ENCODE measurements at regions of chr16 and their contacts with region 1.

Region 1: DNA sequence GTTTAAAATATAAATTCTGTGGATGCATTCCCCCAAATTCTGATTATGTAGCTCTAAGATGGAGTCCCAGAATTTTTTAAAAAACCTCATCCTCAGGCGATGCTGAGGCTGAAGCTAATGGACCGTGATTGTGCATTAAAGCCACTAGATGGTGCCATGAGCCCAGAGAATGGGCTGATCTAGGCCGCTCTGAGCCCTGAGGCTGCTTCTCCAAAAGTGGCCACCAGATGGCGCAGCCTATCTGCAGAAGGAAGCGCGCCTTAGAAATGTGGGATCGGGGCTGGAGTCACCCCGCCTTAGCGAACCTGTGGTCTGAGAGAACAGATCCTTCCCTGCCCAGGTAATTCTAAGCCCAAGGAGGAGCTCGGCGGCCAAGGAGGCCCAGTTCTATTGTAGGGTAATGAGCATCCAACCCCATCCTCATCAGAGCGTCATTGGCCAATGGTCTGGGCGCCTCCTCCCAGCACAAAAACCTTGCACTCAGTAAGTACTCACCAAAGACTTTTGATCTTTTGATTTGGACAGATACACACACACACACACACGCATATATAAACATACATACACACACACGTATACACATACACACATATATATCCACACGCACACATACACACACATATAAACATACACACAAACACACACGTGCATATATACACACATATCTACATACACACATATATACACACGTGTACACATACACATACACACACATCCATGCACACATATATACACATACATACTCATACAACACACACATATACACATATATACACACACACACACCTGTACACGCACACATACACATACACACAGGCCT is 13.7 kb upstream of the MMP2 start:
- DNase-seq: peak; percentile 90 to 97
- H3K4me3 ChIP-seq: no peak overlapping the region
- CTCF ChIP-seq: peak; percentile 21 to 100 (median 65)
- POLR2A ChIP-seq: no peak

Region 2: DNA sequence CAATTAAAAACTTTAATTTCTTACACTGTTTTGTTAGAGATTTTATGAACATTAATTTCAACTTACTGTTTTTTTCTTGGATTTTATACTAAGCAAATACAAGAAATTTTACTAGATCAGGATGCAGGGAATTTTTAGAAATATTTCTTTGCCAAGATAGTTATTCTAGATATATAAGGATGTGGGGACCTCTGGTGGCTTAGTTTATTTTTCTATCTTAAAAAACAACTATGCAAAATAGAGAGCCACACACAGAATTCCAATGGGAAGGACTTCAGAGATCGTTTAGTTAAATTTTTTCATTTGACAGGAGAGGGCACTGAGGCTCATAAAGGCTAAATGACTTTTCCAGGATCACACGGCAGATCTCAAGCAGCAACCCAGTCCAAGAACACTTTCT is 78.2 kb after region 1 on chr16:
- intact Hi-C with region 1: loop called (anchors 5 kb)
- DNase-seq: no peak
- H3K4me3 ChIP-seq: no peak overlapping the region
- CTCF ChIP-seq: no peak
- POLR2A ChIP-seq: no peak

Region 3: DNA sequence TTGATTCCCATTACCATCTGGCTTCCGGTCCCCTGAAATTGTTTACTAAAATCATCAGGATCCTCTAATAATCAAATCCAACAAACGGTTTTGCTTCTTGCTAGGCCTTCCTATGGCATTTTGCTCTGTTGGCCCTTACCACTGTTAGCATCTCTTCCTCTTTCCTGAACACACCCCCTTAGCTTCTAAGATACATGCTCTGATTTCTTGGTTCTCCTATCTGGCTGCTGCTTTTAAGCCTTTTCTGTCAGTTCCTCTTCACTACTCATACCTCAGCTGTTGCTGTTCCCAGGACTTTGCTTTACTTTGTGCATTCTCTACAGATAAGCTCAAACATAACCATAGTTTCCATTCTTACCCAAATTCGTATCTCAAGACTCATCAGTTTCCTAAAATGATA is 112.6 kb after region 1 on chr16:
- intact Hi-C with region 1: no loop called
- DNase-seq: no peak
- H3K4me3 ChIP-seq: no peak overlapping the region
- CTCF ChIP-seq: no peak
- POLR2A ChIP-seq: no peak

Region 4: GRCh38 chr16:55701442-55702319 is 236.4 kb after region 1 on chr16:
- intact Hi-C with region 1: loop called (anchors 2 kb)
- DNase-seq: peak in 1 of 2 donors; percentile 90
- H3K4me3 ChIP-seq: no peak overlapping the region
- CTCF ChIP-seq: peak in 1 of 3 donors; percentile 32
- POLR2A ChIP-seq: no peak

Region 5: DNA sequence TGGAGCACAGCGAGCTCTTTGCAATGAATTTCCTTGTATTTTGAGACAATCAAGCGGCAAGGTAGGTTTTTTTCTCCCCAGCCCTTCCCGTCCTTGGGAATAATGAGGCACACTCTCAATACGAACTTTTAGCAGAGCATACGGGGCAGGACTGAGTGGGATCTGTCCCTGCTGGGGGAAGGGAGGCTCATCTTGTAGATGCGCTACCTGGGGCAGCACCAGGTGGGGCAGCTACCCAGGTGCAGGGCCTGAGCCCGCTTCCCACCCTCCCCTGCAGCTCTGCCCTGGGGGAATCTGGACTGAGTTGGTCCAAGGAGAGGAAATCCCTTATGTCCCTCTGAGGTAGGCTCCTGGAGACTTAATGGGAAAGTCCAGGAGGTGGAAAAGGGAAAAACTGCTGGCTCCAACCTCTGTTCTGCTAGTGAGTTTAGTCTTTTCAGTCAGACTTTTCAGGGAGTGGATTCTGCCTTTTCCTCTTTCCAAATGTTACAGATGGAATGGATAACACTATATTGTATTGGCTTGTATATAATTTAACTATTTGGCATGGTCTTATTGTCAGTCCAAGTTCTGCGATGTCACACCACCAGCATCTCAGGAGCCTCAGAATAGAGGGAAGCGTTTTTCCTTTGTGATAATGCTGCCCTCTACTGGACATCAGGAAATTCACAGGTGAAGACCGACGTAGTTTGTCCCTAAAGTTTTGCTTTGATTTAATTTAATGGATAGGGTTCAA is 377.2 kb after region 1 on chr16:
- intact Hi-C with region 1: loop called (anchors 10 kb)
- DNase-seq: no peak
- H3K4me3 ChIP-seq: no peak overlapping the region
- CTCF ChIP-seq: peak in 1 of 3 donors; percentile 35
- POLR2A ChIP-seq: no peak